HepG2 (cell line): ENCODE measurements at regions of chr11 and their contacts with region 1.

Region 1: DNA sequence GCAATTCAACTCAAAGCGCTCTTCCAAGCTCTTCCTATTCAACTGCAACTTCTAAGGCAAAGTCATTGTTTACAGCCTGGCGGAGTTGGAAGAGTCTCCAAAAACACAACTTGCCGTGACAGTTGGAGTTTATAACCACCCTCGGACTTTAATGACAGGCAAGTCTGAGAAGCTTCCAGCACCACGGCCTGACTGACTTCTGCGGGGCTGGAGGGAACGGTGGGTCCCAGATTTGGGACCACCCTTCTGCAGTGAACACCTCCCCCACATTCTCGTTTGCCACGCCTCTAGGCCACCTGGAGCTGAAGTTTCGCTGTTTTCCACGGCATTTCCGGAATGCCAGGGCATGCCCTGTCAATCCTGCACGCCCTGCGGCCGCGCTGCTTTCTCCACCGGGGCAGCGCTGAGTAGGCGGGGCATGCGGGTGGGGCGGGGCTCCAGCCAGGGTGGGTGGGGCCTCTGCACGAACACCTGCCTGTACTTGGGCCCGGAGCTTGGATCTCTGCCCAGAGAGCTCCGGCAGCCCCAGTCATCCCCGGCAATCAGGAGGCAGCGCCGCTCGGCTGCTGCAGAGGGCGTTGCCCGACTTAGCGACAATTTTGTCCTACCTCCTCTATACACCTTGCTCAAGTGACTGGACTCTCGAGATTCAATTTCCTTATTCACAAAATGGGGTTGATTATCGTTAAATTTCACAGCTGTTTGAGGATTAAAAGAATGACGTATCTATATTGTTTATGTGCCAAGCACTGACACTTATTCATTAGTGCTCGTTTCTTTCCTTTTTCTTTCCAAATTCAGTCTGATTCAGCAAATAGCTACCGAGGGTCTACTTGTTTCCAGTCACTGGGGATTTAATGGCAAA is 48.7 kb upstream of the BIRC3 start:
- DNase-seq: peak; percentile 79
- ATAC-seq: peak; percentile 90
- H3K4me3 ChIP-seq: peak overlapping the region; percentile 51 to 67 (median 56)
- H3K27ac ChIP-seq: peak overlapping the region; percentile 59
- H3K4me1 ChIP-seq: peaks cover 73% of the 10 kb centered on the region
- H3K27me3 ChIP-seq: no peaks in the 10 kb centered on the region
- CTCF ChIP-seq: peak; percentile 69
- EP300 ChIP-seq: no peak
- POLR2A ChIP-seq: peak in 1 of 2 experiments; percentile 49; a peak in 2 of 4 replicates
- RAD21 ChIP-seq: peak; percentile 43; the same call in 1 of the 2 replicates

Region 2: GRCh38 chr11:102238391-102238821 is 30.2 kb before region 1 on chr11:
- CTCF ChIA-PET with region 1: no interaction called
- POLR2A ChIA-PET with region 1: interaction called, 6 read pairs
- in situ Hi-C with region 1: no loop called
- intact Hi-C with region 1: loop called (anchors 2 kb)
- DNase-seq: peak; percentile 57
- ATAC-seq: peak; percentile 66
- H3K4me3 ChIP-seq: peak overlapping the region in 1 of 3 experiments; percentile 35; a peak in 1 of 6 replicates
- H3K27ac ChIP-seq: peak overlapping the region; percentile 61
- H3K4me1 ChIP-seq: peaks cover 62% of the 10 kb centered on the region
- H3K27me3 ChIP-seq: no peaks in the 10 kb centered on the region
- CTCF ChIP-seq: no peak
- EP300 ChIP-seq: no peak
- POLR2A ChIP-seq: no peak
- RAD21 ChIP-seq: no peak

Region 3: DNA sequence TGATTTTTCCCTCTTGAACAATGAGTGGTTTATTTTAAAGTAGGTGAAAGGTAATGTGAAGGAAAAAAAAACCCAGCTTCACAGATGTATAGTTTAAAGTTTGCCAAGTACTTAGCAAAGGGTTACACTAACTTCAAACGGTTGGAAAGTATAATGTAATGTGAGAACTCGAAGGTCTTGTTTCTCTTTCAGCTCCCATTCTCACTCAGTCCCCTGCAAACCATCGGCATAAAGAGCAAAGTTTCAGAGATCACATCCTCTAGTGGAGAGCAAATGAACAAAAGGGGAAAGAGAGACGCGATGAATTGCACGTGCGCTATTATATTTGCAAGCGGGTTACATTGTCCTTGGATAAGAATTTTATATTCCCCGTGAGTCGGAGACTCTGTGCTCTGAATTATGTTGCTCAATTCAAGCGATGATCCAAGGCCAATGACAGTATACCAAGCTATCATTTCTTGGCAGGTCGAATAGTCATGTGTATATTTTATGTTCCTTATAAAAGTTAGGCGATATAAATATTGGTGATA is 11.1 kb after region 1 on chr11:
- CTCF ChIA-PET with region 1: no interaction called
- POLR2A ChIA-PET with region 1: interaction called, 26 read pairs
- in situ Hi-C with region 1: no loop called
- intact Hi-C with region 1: loop called (anchors 1 kb)
- DNase-seq: peak; percentile 98
- ATAC-seq: peak; percentile 97
- H3K4me3 ChIP-seq: peak overlapping the region in 2 of 3 experiments; percentile 4 to 42; a peak in 2 of 6 replicates
- H3K27ac ChIP-seq: peak overlapping the region; percentile 91
- H3K4me1 ChIP-seq: peaks cover 94% of the 10 kb centered on the region
- H3K27me3 ChIP-seq: no peaks in the 10 kb centered on the region
- CTCF ChIP-seq: peak; percentile 48
- EP300 ChIP-seq: peak; percentile 70 to 93; a peak in 3 of 4 replicates
- POLR2A ChIP-seq: no peak
- RAD21 ChIP-seq: peak; percentile 46; the same call in 1 of the 2 replicates